ENCODE measurements at regions of chr1 and their contacts with region 1.

Region 1: DNA sequence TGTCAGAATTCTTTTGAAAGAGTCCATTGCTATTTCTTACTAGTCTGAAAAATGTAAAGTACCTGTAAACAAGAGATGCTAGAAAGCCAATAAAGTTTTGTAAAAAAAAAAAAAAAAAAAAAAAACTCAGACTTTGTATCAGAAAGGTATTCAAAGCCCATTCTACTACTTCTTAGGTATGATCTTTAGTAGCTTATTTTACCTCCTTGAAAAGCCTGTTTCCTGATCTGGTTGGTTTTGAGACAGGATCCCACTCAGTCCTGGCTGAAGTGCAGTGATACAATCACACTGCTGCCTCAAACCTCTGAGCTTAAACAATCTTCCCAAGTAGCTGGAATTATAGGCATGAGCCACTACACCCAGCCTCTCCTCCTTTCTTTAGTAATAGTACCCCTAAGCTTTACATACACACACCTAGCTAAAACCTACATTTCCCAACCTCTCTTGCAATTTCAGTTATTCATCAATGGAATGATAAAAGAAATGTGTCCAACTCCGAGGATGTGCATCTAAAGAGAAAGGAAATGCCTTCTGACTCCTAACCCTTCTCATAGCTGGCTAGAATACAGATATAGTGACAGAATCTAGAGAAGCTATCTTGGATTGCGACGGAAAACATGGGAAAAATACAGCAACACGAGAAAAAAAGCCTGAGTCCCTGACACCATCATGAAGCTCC is 30.6 kb downstream of the EPS15 start:
- DNase-seq: no peak
- ATAC-seq: no peak
- H3K4me3 ChIP-seq: no peak overlapping the region
- H3K4me3 Mint-ChIP-seq: no peak overlapping the region
- H3K27ac ChIP-seq: no peak overlapping the region
- H3K27ac Mint-ChIP-seq: no peak overlapping the region
- H3K4me1 ChIP-seq: peaks cover 3 to 6% of the 10 kb centered on the region in 2 experiments
- H3K4me1 Mint-ChIP-seq: peaks cover 36 to 52% (median 39%) of the 10 kb centered on the region in 3 donors
- H3K27me3 ChIP-seq: no peaks in the 10 kb centered on the region
- H3K27me3 Mint-ChIP-seq: no peaks in the 10 kb centered on the region

Region 2: DNA sequence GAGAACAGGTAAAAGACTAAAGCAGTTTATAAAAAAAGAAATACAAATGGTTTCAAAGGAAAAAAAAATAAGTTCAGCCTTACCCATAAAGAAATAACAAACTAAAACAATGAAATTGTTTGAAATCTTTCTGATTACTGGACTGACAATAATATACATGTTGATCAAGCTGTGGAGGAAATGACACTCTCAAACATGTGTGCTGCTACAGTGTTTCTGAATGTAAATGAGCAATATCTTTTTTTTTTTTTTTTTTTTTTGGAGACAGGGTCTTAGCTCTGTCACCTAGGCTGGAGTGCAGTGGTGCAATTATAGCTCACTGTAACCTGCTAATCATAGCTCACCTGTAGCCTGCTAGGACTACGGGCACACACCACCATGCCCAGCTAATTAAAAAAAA is 24.1 kb after region 1 on chr1:
- CTCF ChIA-PET with region 1: interaction called, 3 to 12 read pairs
- POLR2A ChIA-PET with region 1: interaction called in 1 of 2 experiments, 3 read pairs
- DNase-seq: no peak
- ATAC-seq: peak in 1 of 4 experiments; percentile 44
- H3K4me3 ChIP-seq: no peak overlapping the region
- H3K4me3 Mint-ChIP-seq: peak overlapping the region in 1 of 3 donors; percentile 4
- H3K27ac ChIP-seq: no peak overlapping the region
- H3K27ac Mint-ChIP-seq: no peak overlapping the region
- H3K4me1 ChIP-seq: peaks cover 6 to 13% of the 10 kb centered on the region in 2 experiments
- H3K4me1 Mint-ChIP-seq: peaks cover 83 to 85% (median 84%) of the 10 kb centered on the region in 3 donors
- H3K27me3 ChIP-seq: no peaks in the 10 kb centered on the region
- H3K27me3 Mint-ChIP-seq: no peaks in the 10 kb centered on the region